Tibial artery (tissue), 4 donors: ENCODE measurements at regions of chr13 and their contacts with region 1.

Region 1: GRCh38 chr13:51066091-51066831 is 44.8 kb downstream of the C13orf42 start:
- DNase-seq: no peak
- H3K4me3 ChIP-seq: no peak overlapping the region
- H3K27ac ChIP-seq: no peak overlapping the region
- H3K4me1 ChIP-seq: no peaks in the 10 kb centered on the region
- H3K27me3 ChIP-seq: peaks cover 0 to 12% of the 10 kb centered on the region in 2 donors
- CTCF ChIP-seq: no peak

Region 2: DNA sequence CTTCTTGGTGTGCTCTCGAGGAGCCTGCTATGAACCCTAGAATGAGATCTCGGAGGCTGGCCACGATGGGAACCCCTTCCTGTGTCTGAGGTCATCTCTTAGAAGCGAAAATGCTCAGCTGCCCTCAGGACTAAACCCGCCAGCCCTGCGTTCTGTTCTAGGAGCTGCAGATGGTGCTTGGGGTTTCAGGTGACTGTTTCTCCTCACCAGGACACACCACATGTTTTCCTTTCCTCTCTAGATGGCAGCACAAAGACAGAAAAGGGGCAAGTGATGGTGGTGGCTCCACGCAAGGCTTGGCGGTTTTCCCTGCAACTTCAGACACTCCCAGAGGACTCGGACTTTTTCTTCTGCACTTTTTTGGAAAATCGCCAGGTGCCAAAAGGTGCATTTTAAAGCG is 96.6 kb before region 1 on chr13:
- intact Hi-C with region 1: loop called (anchors 10 kb)
- DNase-seq: no peak
- H3K4me3 ChIP-seq: no peak overlapping the region
- H3K27ac ChIP-seq: no peak overlapping the region
- H3K4me1 ChIP-seq: no peaks in the 10 kb centered on the region
- H3K27me3 ChIP-seq: no peaks in the 10 kb centered on the region
- CTCF ChIP-seq: peak in 1 of 2 experiments; percentile 29

Region 3: DNA sequence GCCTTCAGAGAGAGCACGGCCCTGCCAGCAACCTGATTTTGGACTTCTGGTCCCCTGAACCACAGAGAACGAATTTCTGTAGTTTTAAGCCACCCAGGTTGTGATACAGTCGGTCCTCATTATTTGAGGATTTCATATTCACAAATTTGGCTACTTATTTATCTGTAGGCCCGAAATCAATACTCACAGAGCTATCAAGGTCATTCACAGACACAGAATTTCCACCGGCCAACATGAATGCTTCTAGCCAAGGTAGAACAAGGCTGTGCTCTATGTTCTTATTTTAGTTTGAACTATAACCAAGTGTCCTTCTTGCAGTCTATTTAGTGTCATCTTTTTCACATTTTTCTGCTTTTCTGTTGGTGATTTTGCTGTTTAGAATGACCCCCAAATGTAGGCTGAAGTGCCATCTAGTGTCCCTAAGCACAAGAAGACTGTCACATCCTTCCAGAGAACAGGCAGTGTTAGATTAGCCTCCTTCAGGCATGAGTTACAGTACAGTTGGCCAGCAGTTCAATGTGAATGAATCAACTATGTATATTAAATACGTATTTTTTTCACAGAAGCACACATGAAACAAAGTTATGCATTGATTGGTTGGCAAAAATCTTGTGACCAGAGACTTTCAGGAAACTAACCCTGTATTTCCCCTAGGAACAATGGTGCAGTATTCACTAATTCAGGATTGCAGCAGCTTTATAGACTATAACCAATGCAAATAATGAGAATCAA is 18.7 kb before region 1 on chr13:
- intact Hi-C with region 1: no loop called
- DNase-seq: no peak
- H3K4me3 ChIP-seq: no peak overlapping the region
- H3K27ac ChIP-seq: no peak overlapping the region
- H3K4me1 ChIP-seq: peaks cover 0 to 4% (median 0%) of the 10 kb centered on the region in 4 donors
- H3K27me3 ChIP-seq: no peaks in the 10 kb centered on the region
- CTCF ChIP-seq: no peak

Region 4: GRCh38 chr13:51192348-51192747 is 126.1 kb after region 1 on chr13:
- intact Hi-C with region 1: no loop called
- DNase-seq: no peak
- H3K4me3 ChIP-seq: no peak overlapping the region
- H3K27ac ChIP-seq: no peak overlapping the region
- H3K4me1 ChIP-seq: no peaks in the 10 kb centered on the region
- H3K27me3 ChIP-seq: no peaks in the 10 kb centered on the region
- CTCF ChIP-seq: no peak